CD4-positive, alpha-beta T cell (primary cell): ENCODE measurements at regions of chr14 and their contacts with region 1.

Region 1: DNA sequence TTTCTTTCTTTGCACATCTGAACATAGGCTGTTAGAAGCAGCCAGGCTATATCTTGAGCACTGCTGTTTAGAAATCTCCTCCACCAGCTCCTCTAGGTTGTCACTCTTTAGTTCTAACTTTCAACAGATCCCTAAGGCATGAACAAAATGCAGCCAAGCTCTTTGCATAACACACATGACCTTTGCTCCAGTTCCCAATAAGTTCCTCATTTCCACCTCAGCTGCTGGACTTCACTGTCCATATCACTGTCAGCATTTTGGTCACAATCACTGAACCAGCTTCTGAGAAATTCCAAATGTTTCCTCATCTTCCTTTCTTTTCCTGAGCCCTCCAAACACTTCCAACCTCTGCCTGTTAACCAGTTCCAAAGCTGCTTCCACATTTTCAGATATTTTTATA is 27.6 kb upstream of the C14orf132 start:
- DNase-seq: no peak
- ATAC-seq: no peak
- H3K4me3 ChIP-seq: no peak overlapping the region
- H3K4me3 Mint-ChIP-seq: no peak overlapping the region
- H3K27ac ChIP-seq: no peak overlapping the region
- H3K27ac Mint-ChIP-seq: no peak overlapping the region
- H3K4me1 ChIP-seq: no peaks in the 10 kb centered on the region
- H3K4me1 Mint-ChIP-seq: no peaks in the 10 kb centered on the region
- H3K27me3 ChIP-seq: no peaks in the 10 kb centered on the region
- H3K27me3 Mint-ChIP-seq: peaks cover 27% of the 10 kb centered on the region
- CTCF ChIP-seq: no peak

Region 2: DNA sequence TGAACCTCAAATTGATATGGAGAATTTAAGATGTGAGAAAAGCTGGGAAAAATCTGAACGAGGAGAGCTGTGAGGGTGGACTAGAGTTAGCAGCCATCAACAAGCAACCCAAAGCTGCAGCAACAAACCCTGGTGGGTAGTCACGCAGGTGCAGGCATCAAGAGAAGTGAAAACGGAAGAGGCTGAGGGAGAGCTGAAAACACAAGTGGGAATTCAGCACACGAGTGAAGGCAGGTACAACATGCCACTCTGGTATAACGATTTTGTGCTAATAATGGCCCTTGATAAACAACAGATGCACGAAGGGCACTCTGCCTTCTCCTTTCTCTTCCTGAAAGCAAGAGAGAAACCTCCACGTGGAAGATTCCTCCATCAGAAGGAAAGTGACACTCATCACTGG is 313.8 kb before region 1 on chr14:
- CTCF ChIA-PET with region 1: no interaction called
- POLR2A ChIA-PET with region 1: no interaction called
- intact Hi-C with region 1: no loop called
- DNase-seq: no peak
- ATAC-seq: no peak
- H3K4me3 ChIP-seq: no peak overlapping the region
- H3K4me3 Mint-ChIP-seq: no peak overlapping the region
- H3K27ac ChIP-seq: no peak overlapping the region
- H3K27ac Mint-ChIP-seq: no peak overlapping the region
- H3K4me1 ChIP-seq: no peaks in the 10 kb centered on the region
- H3K4me1 Mint-ChIP-seq: no peaks in the 10 kb centered on the region
- H3K27me3 ChIP-seq: peaks cover 2 to 6% of the 10 kb centered on the region in 2 experiments
- H3K27me3 Mint-ChIP-seq: peaks cover 67% of the 10 kb centered on the region
- CTCF ChIP-seq: no peak

Region 3: DNA sequence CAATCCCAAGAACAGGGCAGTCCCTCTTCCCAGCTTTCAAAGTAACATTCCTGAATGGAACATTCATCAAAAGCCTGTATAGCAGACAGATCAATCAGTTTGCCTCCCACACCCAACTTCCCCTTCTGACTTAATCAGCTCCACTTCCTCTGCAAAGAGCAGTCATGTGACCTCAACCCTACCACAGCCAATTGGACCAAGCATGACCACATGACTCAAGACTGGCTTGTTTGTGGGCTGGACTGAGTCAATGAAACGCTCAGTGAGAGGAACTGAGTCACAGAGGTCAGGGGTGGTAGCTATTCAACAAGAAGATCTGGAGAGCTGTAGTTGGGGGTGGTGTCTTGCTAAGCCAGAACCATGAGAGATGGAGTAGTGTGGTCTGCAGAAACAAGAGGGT is 176.3 kb before region 1 on chr14:
- CTCF ChIA-PET with region 1: no interaction called
- POLR2A ChIA-PET with region 1: no interaction called
- intact Hi-C with region 1: no loop called
- DNase-seq: no peak
- ATAC-seq: no peak
- H3K4me3 ChIP-seq: no peak overlapping the region
- H3K4me3 Mint-ChIP-seq: no peak overlapping the region
- H3K27ac ChIP-seq: no peak overlapping the region
- H3K27ac Mint-ChIP-seq: no peak overlapping the region
- H3K4me1 ChIP-seq: no peaks in the 10 kb centered on the region
- H3K4me1 Mint-ChIP-seq: peaks cover 5% of the 10 kb centered on the region
- H3K27me3 ChIP-seq: peaks cover 5% of the 10 kb centered on the region in 2 experiments
- H3K27me3 Mint-ChIP-seq: peaks cover 45% of the 10 kb centered on the region
- CTCF ChIP-seq: no peak

Region 4: DNA sequence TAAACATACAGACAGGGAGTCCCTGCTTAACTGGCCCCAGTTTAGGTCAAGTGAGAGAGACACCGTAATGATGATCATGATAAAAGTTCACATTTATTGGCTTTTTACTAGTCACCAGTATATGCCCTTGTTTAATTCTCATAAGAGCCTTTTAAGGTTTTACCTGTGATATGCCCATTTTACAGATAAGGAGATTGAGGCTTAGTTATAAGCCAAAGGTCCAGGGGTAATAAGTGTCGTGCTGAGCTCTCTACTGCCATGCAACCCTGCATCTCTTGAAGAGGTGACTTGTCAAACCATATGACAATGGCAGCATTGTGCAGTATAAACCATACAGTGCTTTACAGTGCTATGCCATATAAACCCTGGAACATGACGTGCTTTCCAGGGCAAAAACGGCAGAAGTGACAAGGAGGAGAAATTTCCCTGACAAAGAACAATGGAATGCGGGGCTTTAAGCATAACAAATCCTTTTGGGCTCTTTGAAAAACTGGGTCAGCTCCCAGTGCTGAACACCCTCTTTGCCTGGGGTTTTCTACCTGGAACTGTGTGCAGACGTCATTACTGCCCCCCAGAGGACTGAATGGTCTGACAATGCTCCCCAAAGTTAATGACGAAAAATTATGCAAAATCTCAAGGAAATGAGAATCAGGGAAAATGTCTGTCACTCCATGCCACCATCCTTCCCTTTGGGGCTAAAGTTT is 32.1 kb before region 1 on chr14:
- CTCF ChIA-PET with region 1: no interaction called
- POLR2A ChIA-PET with region 1: no interaction called
- intact Hi-C with region 1: no loop called
- DNase-seq: no peak
- ATAC-seq: no peak
- H3K4me3 ChIP-seq: no peak overlapping the region
- H3K4me3 Mint-ChIP-seq: no peak overlapping the region
- H3K27ac ChIP-seq: no peak overlapping the region
- H3K27ac Mint-ChIP-seq: no peak overlapping the region
- H3K4me1 ChIP-seq: no peaks in the 10 kb centered on the region
- H3K4me1 Mint-ChIP-seq: no peaks in the 10 kb centered on the region
- H3K27me3 ChIP-seq: peaks cover 19 to 36% of the 10 kb centered on the region in 2 experiments
- H3K27me3 Mint-ChIP-seq: peaks cover 29% of the 10 kb centered on the region
- CTCF ChIP-seq: no peak

Region 5: GRCh38 chr14:96038920-96039632 is 27.5 kb after region 1 on chr14 and contains the start of gene C14orf132:
- CTCF ChIA-PET with region 1: no interaction called
- POLR2A ChIA-PET with region 1: no interaction called
- intact Hi-C with region 1: no loop called
- DNase-seq: peak; percentile 20 to 70 (median 47)
- ATAC-seq: peak; percentile 81
- H3K4me3 ChIP-seq: peak within 1 kb of the TSS; percentile 57
- H3K4me3 Mint-ChIP-seq: peak within 1 kb of the TSS; percentile 90
- H3K27ac ChIP-seq: no peak within 1 kb of the TSS
- H3K27ac Mint-ChIP-seq: no peak within 1 kb of the TSS
- H3K4me1 ChIP-seq: peaks cover 15% of the 10 kb centered on the region
- H3K4me1 Mint-ChIP-seq: peaks cover 49% of the 10 kb centered on the region
- H3K27me3 ChIP-seq: peaks cover 29% of the 10 kb centered on the region in 2 experiments
- H3K27me3 Mint-ChIP-seq: peaks cover 50% of the 10 kb centered on the region
- CTCF ChIP-seq: no peak
- total RNA-seq, gene C14orf132: 2.0 to 2.4 TPM

Region 6: GRCh38 chr14:96053600-96054381 is 42.2 kb after region 1 on chr14:
- CTCF ChIA-PET with region 1: no interaction called
- POLR2A ChIA-PET with region 1: no interaction called
- intact Hi-C with region 1: loop called in 1 of 2 experiments (anchors 5 kb)
- DNase-seq: no peak
- ATAC-seq: no peak
- H3K4me3 ChIP-seq: no peak overlapping the region
- H3K4me3 Mint-ChIP-seq: no peak overlapping the region
- H3K27ac ChIP-seq: no peak overlapping the region
- H3K27ac Mint-ChIP-seq: no peak overlapping the region
- H3K4me1 ChIP-seq: no peaks in the 10 kb centered on the region
- H3K4me1 Mint-ChIP-seq: peaks cover 5% of the 10 kb centered on the region
- H3K27me3 ChIP-seq: peaks cover 3 to 4% of the 10 kb centered on the region in 2 experiments
- H3K27me3 Mint-ChIP-seq: peaks cover 18% of the 10 kb centered on the region
- CTCF ChIP-seq: no peak

Region 7: GRCh38 chr14:96275177-96276112 is 263.8 kb after region 1 on chr14:
- CTCF ChIA-PET with region 1: no interaction called
- POLR2A ChIA-PET with region 1: no interaction called
- intact Hi-C with region 1: loop called in 1 of 2 experiments (anchors 5 kb)
- DNase-seq: peak; percentile 47 to 84 (median 66)
- ATAC-seq: no peak
- H3K4me3 ChIP-seq: no peak overlapping the region
- H3K4me3 Mint-ChIP-seq: no peak overlapping the region
- H3K27ac ChIP-seq: no peak overlapping the region
- H3K27ac Mint-ChIP-seq: no peak overlapping the region
- H3K4me1 ChIP-seq: peaks cover 3% of the 10 kb centered on the region
- H3K4me1 Mint-ChIP-seq: no peaks in the 10 kb centered on the region
- H3K27me3 ChIP-seq: no peaks in the 10 kb centered on the region
- H3K27me3 Mint-ChIP-seq: no peaks in the 10 kb centered on the region
- CTCF ChIP-seq: peak; percentile 83